A549 (cell line): ENCODE measurements at regions of chr17 and their contacts with region 1.

Region 1: DNA sequence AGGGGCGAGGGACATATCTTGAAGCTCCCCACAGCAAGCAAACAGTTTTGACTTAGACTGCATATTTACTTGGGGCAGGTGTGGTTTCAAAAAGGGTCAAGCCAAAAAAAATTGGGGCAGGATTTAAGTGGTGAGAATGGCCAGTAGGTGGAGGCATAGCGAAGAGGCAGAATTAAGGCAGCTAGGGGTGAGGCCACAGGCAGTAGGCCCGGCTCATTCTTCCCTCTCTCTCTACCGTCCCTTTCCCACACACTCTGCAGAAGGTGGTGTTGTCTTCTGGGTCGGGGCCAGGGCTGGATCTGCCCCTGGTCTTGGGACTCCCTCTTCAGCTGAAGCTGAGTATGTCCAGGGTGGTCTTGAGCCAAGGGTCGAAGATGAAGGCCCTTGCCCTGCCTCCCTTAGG is 2.6 kb downstream of the SHBG start:
- DNase-seq: peak; percentile 71 to 79
- ATAC-seq: peak; percentile 57 to 69; a peak in 5 of 6 replicates
- H3K4me3 ChIP-seq: no peak overlapping the region
- H3K27ac ChIP-seq: peak overlapping the region in 1 of 2 experiments; percentile 52; a peak in 2 of 6 replicates
- H3K4me1 ChIP-seq: peaks cover 5% of the 10 kb centered on the region; the same call in 2 of the 3 replicates
- CTCF ChIP-seq: peak; percentile 56; the same call in 2 of the 3 replicates
- EP300 ChIP-seq: no peak
- POLR2A ChIP-seq: no peak
- RAD21 ChIP-seq: peak; percentile 51 to 61

Region 2: GRCh38 chr17:7650509-7651096 is 18.1 kb after region 1 on chr17 and contains the start of gene ATP1B2:
- CTCF ChIA-PET with region 1: interaction called, 80 read pairs
- POLR2A ChIA-PET with region 1: interaction called, 13 read pairs
- DNase-seq: peak; percentile 59 to 90
- ATAC-seq: peak; percentile 63 to 85
- H3K4me3 ChIP-seq: peak within 1 kb of the TSS; percentile 59
- H3K27ac ChIP-seq: peak within 1 kb of the TSS in 1 of 2 experiments; percentile 58; a peak in 4 of 6 replicates
- H3K4me1 ChIP-seq: peaks cover 16% of the 10 kb centered on the region; the same call in 1 of the 3 replicates
- CTCF ChIP-seq: no peak
- EP300 ChIP-seq: no peak
- POLR2A ChIP-seq: no peak
- RAD21 ChIP-seq: no peak
- polyA plus RNA-seq, gene ATP1B2: 0.16 and 0.20 TPM in 2 replicates

Region 3: GRCh38 chr17:7673239-7673638 is 40.7 kb after region 1 on chr17:
- CTCF ChIA-PET with region 1: interaction called, 72 read pairs
- POLR2A ChIA-PET with region 1: no interaction called
- DNase-seq: peak in 1 of 2 experiments; percentile 64
- ATAC-seq: peak in 1 of 2 experiments; percentile 27; a peak in 2 of 6 replicates
- H3K4me3 ChIP-seq: no peak overlapping the region
- H3K27ac ChIP-seq: no peak overlapping the region
- H3K4me1 ChIP-seq: no peaks in the 10 kb centered on the region
- CTCF ChIP-seq: peak; percentile 47
- EP300 ChIP-seq: no peak
- POLR2A ChIP-seq: no peak
- RAD21 ChIP-seq: peak; percentile 43 to 59

Region 4: DNA sequence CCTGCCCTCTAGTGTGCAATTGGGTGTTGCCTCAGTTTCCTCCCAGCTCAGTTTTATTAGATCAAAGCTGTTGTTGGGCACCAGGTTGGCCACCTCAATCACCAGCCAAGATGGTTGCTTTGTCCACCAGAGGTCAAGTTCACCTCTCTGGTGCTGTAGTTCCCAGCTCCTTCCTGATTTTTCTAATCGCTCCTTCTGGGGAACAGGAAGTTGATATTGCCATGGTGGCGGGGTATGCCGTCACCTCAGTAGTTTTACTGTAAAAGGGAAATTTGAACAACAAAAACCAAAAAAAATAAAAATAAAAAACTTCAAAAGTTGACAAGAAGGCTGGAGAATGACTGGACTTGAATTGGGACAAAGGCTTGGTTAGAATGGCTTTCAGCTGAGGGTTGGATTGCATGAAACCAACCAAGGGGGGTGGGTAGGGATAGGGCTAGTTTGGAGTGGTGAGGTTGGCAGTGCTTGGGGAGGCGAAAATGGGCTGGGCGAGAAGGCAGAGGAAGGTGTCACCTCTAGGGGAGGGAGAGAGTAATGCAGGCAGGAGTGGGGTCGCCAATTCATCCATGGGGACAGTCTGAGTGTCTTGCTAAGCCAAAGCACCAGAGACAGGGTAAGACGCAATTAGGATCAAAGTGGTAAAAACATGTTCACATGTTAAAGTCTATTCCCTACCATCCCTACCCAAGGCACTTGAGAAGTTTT is 78.7 kb after region 1 on chr17:
- CTCF ChIA-PET with region 1: interaction called, 21 read pairs
- POLR2A ChIA-PET with region 1: no interaction called
- DNase-seq: peak; percentile 54 to 68
- ATAC-seq: peak; percentile 60 to 75; a peak in 5 of 6 replicates
- H3K4me3 ChIP-seq: no peak overlapping the region
- H3K27ac ChIP-seq: no peak overlapping the region
- H3K4me1 ChIP-seq: peaks cover 5% of the 10 kb centered on the region
- CTCF ChIP-seq: no peak
- EP300 ChIP-seq: no peak
- POLR2A ChIP-seq: no peak
- RAD21 ChIP-seq: no peak

Region 5: DNA sequence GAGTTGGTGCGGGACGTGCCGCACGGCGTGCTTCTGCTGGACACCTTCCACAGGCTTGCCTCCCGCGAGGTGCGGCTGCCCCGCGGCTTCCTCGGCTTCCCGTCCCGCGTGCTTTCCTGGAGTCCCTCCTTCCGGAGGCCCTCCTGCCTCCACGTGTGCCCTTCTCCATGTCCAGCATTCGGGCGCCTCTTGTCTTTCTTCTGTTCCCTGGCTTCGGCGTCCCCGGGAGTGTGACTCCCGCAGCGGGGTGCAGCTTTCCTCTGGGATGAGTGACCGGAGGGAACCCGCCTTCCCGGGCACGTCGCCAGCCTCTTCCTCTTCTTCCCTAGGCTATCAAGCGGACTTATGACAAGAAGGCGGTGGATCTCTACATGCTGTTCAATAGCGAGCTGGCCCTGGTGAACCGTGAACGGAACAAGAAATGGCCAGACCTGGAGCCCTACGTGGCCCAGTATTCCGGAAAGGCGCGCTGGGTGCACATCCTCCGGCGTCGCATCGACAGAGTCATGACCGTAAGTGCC is 108.0 kb after region 1 on chr17:
- CTCF ChIA-PET with region 1: interaction called, 11 read pairs
- POLR2A ChIA-PET with region 1: no interaction called
- DNase-seq: no peak
- ATAC-seq: no peak
- H3K4me3 ChIP-seq: no peak overlapping the region
- H3K27ac ChIP-seq: no peak overlapping the region
- H3K4me1 ChIP-seq: peaks cover 3% of the 10 kb centered on the region
- CTCF ChIP-seq: no peak
- EP300 ChIP-seq: no peak
- POLR2A ChIP-seq: no peak
- RAD21 ChIP-seq: no peak